A549 (cell line): ENCODE measurements at regions of chr14 and their contacts with region 1.

Region 1: DNA sequence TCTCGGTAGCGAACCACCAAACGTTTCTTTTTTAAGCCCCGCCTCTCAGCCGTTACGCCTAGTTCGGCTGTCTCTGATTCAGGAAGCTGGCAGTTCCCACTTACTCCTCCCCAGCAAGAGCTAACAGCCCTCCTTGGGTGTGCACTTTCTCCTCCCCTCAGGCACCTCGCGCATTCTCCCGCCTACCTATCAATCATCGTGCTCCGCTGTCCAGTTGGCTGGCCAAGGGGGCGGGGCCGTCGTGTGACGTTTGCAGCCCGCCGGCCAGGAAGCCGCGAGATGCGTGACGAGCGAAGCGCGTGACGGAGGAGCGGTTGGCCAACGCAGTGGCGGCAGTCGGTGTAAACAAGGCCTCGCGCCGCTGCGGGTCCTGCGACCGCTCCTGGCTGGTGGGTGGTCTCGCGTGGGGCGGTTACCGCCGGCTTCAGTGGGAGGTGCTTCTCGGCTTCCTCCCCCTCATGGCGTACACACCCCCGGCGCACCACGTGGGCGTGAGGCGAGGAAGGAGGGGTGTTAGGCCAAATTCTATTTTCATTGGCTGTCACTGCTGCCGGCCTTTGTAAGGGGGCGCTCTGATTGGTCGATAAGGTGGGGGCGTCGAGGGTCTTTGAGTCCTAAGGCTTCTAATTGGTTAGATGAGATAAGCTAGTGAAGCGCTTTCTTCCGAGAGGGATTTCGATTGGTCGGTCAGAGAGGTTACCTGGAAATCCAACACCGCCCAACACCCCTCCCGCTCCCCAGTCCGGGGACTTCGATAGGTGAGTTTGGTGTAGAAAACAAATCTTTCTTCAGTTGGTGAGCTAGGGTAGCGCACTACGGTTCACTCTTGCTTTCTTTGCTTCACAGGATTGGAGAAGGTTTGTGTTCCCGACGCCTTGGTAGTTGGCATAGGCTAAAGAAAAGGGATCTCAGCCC is at the starts of genes DCAF11 and NRL:
- DNase-seq: peak; percentile 99 to 100
- ATAC-seq: peak; percentile 92 to 94
- H3K4me3 ChIP-seq: peak within 1 kb of the TSS; percentile 62
- H3K27ac ChIP-seq: peak within 1 kb of the TSS; percentile 95 to 96
- H3K4me1 ChIP-seq: peaks cover 11% of the 10 kb centered on the region; the same call in 1 of the 3 replicates
- CTCF ChIP-seq: no peak
- EP300 ChIP-seq: no peak
- POLR2A ChIP-seq: 0 out of 2 replicates have a peak, but pooled peaks have one; percentile 3
- RAD21 ChIP-seq: no peak
- polyA plus RNA-seq, gene DCAF11: 27.9 and 30.2 TPM in 2 replicates
- polyA plus RNA-seq, gene NRL: 0.86 and 0.97 TPM in 2 replicates

Region 2: GRCh38 chr14:23548351-23549318 is 566.2 kb before region 1 on chr14:
- CTCF ChIA-PET with region 1: no interaction called
- POLR2A ChIA-PET with region 1: no interaction called
- DNase-seq: no peak
- ATAC-seq: no peak
- H3K4me3 ChIP-seq: no peak overlapping the region
- H3K27ac ChIP-seq: no peak overlapping the region
- H3K4me1 ChIP-seq: peaks cover 4% of the 10 kb centered on the region; the same call in 1 of the 3 replicates
- CTCF ChIP-seq: no peak
- EP300 ChIP-seq: no peak
- POLR2A ChIP-seq: no peak
- RAD21 ChIP-seq: no peak

Region 3: GRCh38 chr14:24051789-24052655 is 62.8 kb before region 1 on chr14 and contains the start of gene CARMIL3:
- CTCF ChIA-PET with region 1: interaction called, 244 read pairs
- POLR2A ChIA-PET with region 1: interaction called, 10 read pairs
- DNase-seq: peak; percentile 35 to 62
- ATAC-seq: peak; percentile 83 to 90
- H3K4me3 ChIP-seq: peak within 1 kb of the TSS; percentile 75
- H3K27ac ChIP-seq: peak within 1 kb of the TSS; percentile 84 to 88
- H3K4me1 ChIP-seq: peaks cover 10% of the 10 kb centered on the region; the same call in 2 of the 3 replicates
- CTCF ChIP-seq: no peak
- EP300 ChIP-seq: no peak
- POLR2A ChIP-seq: peak; percentile 57; the same call in 1 of the 2 replicates
- RAD21 ChIP-seq: no peak
- polyA plus RNA-seq, gene CARMIL3: 0.45 and 0.79 TPM in 2 replicates

Region 4: GRCh38 chr14:24086193-24086955 is 28.4 kb before region 1 on chr14:
- CTCF ChIA-PET with region 1: interaction called, 225 read pairs
- POLR2A ChIA-PET with region 1: interaction called, 13 read pairs
- DNase-seq: no peak
- ATAC-seq: no peak
- H3K4me3 ChIP-seq: no peak overlapping the region
- H3K27ac ChIP-seq: no peak overlapping the region
- H3K4me1 ChIP-seq: peaks cover 5% of the 10 kb centered on the region
- CTCF ChIP-seq: no peak
- EP300 ChIP-seq: no peak
- POLR2A ChIP-seq: no peak
- RAD21 ChIP-seq: no peak

Region 5: GRCh38 chr14:24100197-24100981 is 14.4 kb before region 1 on chr14:
- CTCF ChIA-PET with region 1: interaction called, 225 read pairs
- POLR2A ChIA-PET with region 1: interaction called, 55 read pairs
- DNase-seq: no peak
- ATAC-seq: no peak
- H3K4me3 ChIP-seq: no peak overlapping the region
- H3K27ac ChIP-seq: no peak overlapping the region
- H3K4me1 ChIP-seq: peaks cover 6% of the 10 kb centered on the region
- CTCF ChIP-seq: no peak
- EP300 ChIP-seq: no peak
- POLR2A ChIP-seq: no peak
- RAD21 ChIP-seq: no peak

Region 6: GRCh38 chr14:24141097-24141880 is 26.5 kb after region 1 on chr14 and contains the start of gene EMC9:
- CTCF ChIA-PET with region 1: interaction called, 7 read pairs
- POLR2A ChIA-PET with region 1: interaction called, 48 read pairs
- DNase-seq: peak; percentile 99
- ATAC-seq: peak; percentile 81 to 93
- H3K4me3 ChIP-seq: peak within 1 kb of the TSS; percentile 59
- H3K27ac ChIP-seq: peak within 1 kb of the TSS; percentile 86 to 95
- H3K4me1 ChIP-seq: peaks cover 39% of the 10 kb centered on the region
- CTCF ChIP-seq: no peak
- EP300 ChIP-seq: no peak
- POLR2A ChIP-seq: peak; percentile 81; the same call in 1 of the 2 replicates
- RAD21 ChIP-seq: no peak; a peak in 1 of 5 replicates
- polyA plus RNA-seq, gene EMC9: 20.7 and 21.5 TPM in 2 replicates